ENCODE measurements at regions of chr20 and their contacts with region 1.

Region 1: GRCh38 chr20:43448748-43449535 is 8.8 kb upstream of the SRSF6 start:
- DNase-seq: peak; percentile 56 to 72
- ATAC-seq: peak; percentile 82 to 85
- H3K4me3 ChIP-seq: no peak overlapping the region
- H3K27ac ChIP-seq: no peak overlapping the region
- H3K4me1 ChIP-seq: 0 out of 3 replicates have a peak, but pooled peaks cover 3% of the 10 kb centered on the region
- CTCF ChIP-seq: peak; percentile 83
- EP300 ChIP-seq: no peak
- POLR2A ChIP-seq: no peak
- RAD21 ChIP-seq: peak; percentile 87 to 88

Region 2: GRCh38 chr20:43363506-43363905 is 85.4 kb before region 1 on chr20:
- CTCF ChIA-PET with region 1: no interaction called
- POLR2A ChIA-PET with region 1: no interaction called
- DNase-seq: no peak
- ATAC-seq: 0 out of 6 replicates have a peak, but pooled peaks of 1 of the 2 experiments have one; percentile 39
- H3K4me3 ChIP-seq: no peak overlapping the region
- H3K27ac ChIP-seq: no peak overlapping the region
- H3K4me1 ChIP-seq: no peaks in the 10 kb centered on the region
- CTCF ChIP-seq: no peak
- EP300 ChIP-seq: no peak
- POLR2A ChIP-seq: no peak
- RAD21 ChIP-seq: no peak

Region 3: DNA sequence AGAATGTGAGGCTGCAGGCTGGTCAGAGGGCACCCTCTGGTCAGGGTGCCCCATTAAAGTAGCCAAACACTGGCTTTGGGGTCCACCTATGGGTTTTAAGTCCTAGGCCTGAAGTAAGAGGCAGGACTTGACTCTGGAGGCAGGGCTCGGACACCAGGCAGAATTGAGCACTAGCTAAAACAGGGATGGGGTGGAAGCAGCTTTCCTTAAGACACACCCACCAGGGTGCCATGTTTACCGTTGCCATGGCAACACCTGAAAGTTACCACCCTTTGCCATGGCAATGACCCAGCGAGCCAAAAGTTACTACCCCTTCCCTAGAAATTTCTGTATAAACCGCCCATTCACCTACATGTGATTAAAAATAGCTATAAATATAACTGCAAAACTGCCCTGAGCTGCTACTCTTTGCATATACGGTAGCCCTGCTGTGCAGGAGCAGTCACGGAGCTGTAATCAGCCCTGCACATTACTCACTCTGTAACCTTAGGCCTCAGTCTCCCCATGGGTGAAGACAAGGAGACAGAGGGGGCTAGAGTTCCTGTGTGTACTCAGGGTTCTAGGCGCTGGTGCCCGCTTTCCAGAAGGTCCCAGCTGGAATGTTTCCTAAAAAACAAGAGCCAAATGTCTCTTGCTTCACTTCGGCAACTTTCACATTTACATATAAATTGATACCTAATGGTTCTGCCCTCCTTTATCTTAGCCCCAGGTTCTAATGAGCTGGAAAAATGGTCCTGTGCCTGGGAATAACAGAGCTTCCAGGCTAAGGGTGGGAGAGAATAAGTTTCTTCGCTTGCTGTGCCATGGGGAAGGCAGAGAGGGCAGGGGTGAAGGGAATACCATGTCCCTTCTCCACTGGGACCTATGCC is 18.4 kb before region 1 on chr20:
- CTCF ChIA-PET with region 1: no interaction called
- POLR2A ChIA-PET with region 1: no interaction called
- DNase-seq: no peak
- ATAC-seq: no peak
- H3K4me3 ChIP-seq: no peak overlapping the region
- H3K27ac ChIP-seq: no peak overlapping the region
- H3K4me1 ChIP-seq: no peaks in the 10 kb centered on the region
- CTCF ChIP-seq: no peak
- EP300 ChIP-seq: no peak
- POLR2A ChIP-seq: no peak
- RAD21 ChIP-seq: no peak

Region 4: DNA sequence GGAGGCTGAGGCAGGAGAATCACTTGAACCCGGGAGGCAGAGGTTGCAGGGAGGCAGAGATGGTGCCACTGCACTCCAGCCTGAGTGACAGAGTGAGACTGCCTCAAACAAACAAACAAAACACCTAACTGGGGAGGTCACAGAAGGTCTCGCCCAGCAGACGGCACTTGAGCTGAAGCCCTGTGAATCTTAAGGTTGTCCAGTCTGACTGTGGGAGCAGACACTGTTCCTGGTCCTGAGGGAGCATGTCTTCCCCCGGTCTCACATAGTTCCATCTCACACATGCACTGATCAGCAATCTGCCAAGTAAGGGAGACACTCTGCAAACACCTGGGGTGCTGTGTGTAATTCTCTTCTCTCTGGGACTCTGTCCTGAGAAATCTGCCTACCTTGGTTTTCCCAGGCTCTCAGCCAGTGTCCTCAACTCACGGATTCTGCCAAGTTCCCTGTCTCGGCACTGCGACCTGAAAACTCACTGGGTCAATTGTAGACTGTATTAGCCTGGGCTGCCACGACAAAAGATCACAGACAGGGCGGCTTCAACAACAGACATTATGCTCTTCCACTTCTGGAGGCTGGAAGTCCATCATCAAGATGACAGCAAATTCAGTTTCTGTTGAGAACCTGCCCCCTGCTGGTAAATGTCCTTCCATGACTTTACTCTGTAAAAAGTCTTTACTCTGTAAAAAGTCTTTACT is 643.8 kb after region 1 on chr20:
- CTCF ChIA-PET with region 1: interaction called, 19 read pairs
- POLR2A ChIA-PET with region 1: no interaction called
- DNase-seq: peak in 1 of 2 experiments; percentile 60
- ATAC-seq: peak; percentile 66 to 80; a peak in 3 of 6 replicates
- H3K4me3 ChIP-seq: no peak overlapping the region
- H3K27ac ChIP-seq: no peak overlapping the region
- H3K4me1 ChIP-seq: peaks cover 4% of the 10 kb centered on the region; the same call in 2 of the 3 replicates
- CTCF ChIP-seq: peak; percentile 66
- EP300 ChIP-seq: no peak
- POLR2A ChIP-seq: no peak
- RAD21 ChIP-seq: peak; percentile 59 to 61